PC-3 (cell line): ENCODE measurements at regions of chr16 and their contacts with region 1.

Region 1: GRCh38 chr16:71808593-71809459 is at the start of gene AP1G1:
- DNase-seq: peak; percentile 94
- ATAC-seq: peak; percentile 93
- H3K4me3 ChIP-seq: peak within 1 kb of the TSS; percentile 80
- H3K27ac ChIP-seq: peak within 1 kb of the TSS; percentile 93
- H3K4me1 ChIP-seq: peaks cover 11% of the 10 kb centered on the region
- H3K27me3 ChIP-seq: no peaks in the 10 kb centered on the region
- CTCF ChIP-seq: no peak
- total RNA-seq, gene AP1G1: 51.1 and 51.2 TPM in 2 replicates

Region 2: GRCh38 chr16:71734511-71734910 is 74.3 kb before region 1 on chr16:
- CTCF ChIA-PET with region 1: no interaction called
- POLR2A ChIA-PET with region 1: no interaction called
- intact Hi-C with region 1: no loop called
- DNase-seq: no peak
- ATAC-seq: no peak
- H3K4me3 ChIP-seq: no peak overlapping the region
- H3K27ac ChIP-seq: no peak overlapping the region
- H3K4me1 ChIP-seq: no peaks in the 10 kb centered on the region
- H3K27me3 ChIP-seq: no peaks in the 10 kb centered on the region
- CTCF ChIP-seq: no peak

Region 3: GRCh38 chr16:71775949-71776348 is 32.9 kb before region 1 on chr16:
- CTCF ChIA-PET with region 1: no interaction called
- POLR2A ChIA-PET with region 1: no interaction called
- intact Hi-C with region 1: loop called (anchors 5 kb)
- DNase-seq: no peak
- ATAC-seq: no peak
- H3K4me3 ChIP-seq: no peak overlapping the region
- H3K27ac ChIP-seq: no peak overlapping the region
- H3K4me1 ChIP-seq: peaks cover 27% of the 10 kb centered on the region
- H3K27me3 ChIP-seq: no peaks in the 10 kb centered on the region
- CTCF ChIP-seq: no peak

Region 4: GRCh38 chr16:71853413-71853812 is 44.6 kb after region 1 on chr16:
- CTCF ChIA-PET with region 1: no interaction called
- POLR2A ChIA-PET with region 1: no interaction called
- intact Hi-C with region 1: no loop called
- DNase-seq: no peak
- ATAC-seq: no peak
- H3K4me3 ChIP-seq: no peak overlapping the region
- H3K27ac ChIP-seq: no peak overlapping the region
- H3K4me1 ChIP-seq: no peaks in the 10 kb centered on the region
- H3K27me3 ChIP-seq: no peaks in the 10 kb centered on the region
- CTCF ChIP-seq: no peak

Region 5: DNA sequence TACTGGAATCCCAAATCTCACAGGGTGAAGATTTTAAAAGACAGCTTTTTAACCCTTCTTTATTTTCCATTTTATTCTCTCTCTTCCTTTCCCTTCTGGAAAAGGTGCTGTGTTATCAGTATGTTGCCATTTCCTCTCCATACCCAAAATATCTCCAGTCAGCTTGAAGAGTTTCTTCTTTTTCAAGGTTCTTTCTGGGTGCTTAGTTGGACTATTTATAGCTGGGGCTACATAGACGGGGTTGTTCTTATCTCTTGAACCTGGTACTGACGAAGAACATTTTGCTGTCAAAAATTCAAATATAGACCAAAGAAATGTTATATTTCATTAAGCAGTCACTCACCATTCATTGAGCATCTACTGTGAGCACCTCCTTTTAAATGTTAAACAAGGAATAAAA is 135.1 kb after region 1 on chr16:
- CTCF ChIA-PET with region 1: no interaction called
- POLR2A ChIA-PET with region 1: no interaction called
- intact Hi-C with region 1: no loop called
- DNase-seq: no peak
- ATAC-seq: no peak
- H3K4me3 ChIP-seq: no peak overlapping the region
- H3K27ac ChIP-seq: no peak overlapping the region
- H3K4me1 ChIP-seq: no peaks in the 10 kb centered on the region
- H3K27me3 ChIP-seq: no peaks in the 10 kb centered on the region
- CTCF ChIP-seq: no peak

Region 6: GRCh38 chr16:71961066-71962039 is 152.5 kb after region 1 on chr16:
- CTCF ChIA-PET with region 1: interaction called, 3 read pairs
- POLR2A ChIA-PET with region 1: interaction called, 13 read pairs
- intact Hi-C with region 1: no loop called
- DNase-seq: peak; percentile 82
- ATAC-seq: peak; percentile 96
- H3K4me3 ChIP-seq: no peak overlapping the region
- H3K27ac ChIP-seq: no peak overlapping the region
- H3K4me1 ChIP-seq: no peaks in the 10 kb centered on the region
- H3K27me3 ChIP-seq: no peaks in the 10 kb centered on the region
- CTCF ChIP-seq: peak; percentile 80